Activated CD4-positive, alpha-beta memory T cell treated with anti-CD3 and anti-CD28 coated beads for 36 hours (primary cell): ENCODE measurements at regions of chr16 and their contacts with region 1.

Region 1: DNA sequence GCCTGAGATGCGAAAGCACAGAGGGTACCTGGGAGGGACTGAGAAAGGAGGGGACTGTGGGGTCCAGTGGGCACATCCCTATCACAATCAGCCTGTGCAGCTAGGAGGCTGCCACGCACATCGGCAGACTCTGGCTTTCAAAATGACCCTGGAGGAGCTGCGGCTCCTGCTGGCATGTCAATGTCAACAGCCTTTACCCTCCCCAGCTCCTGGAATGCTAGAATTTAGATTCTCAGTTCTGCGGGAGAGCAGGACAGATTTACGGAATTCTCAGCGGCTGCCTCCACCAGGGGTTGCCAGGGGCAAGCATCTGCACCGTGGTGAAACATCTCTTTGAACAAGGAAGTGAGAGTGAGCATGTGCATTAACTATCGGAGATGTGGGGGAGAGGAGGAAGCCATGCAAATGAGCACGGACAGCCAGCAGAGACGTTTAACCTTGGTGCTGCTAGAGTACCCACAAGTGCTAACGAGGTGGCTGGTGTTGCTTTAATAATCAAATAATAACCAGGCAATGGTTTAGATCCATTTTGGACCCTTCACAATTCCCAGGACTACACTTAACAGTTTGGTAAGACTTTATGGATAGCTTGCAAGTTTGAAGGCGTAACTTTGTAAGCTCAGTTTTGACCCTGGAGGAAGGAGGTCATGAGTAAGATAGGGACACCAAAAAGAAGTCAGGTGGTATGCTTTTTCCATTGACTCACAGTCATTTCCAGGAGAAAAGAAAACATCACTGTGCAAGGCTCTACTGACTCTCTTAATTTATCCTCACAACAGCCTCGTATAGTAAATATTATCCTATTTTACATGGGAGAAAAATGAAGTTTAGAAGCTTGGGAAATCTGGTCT is 54.1 kb downstream of the XYLT1 start:
- DNase-seq: peak; percentile 73
- H3K4me3 Mint-ChIP-seq: peak overlapping the region; percentile 63
- H3K27ac Mint-ChIP-seq: peak overlapping the region; percentile 94
- H3K4me1 Mint-ChIP-seq: peaks cover 48% of the 10 kb centered on the region
- H3K27me3 Mint-ChIP-seq: no peaks in the 10 kb centered on the region

Region 2: DNA sequence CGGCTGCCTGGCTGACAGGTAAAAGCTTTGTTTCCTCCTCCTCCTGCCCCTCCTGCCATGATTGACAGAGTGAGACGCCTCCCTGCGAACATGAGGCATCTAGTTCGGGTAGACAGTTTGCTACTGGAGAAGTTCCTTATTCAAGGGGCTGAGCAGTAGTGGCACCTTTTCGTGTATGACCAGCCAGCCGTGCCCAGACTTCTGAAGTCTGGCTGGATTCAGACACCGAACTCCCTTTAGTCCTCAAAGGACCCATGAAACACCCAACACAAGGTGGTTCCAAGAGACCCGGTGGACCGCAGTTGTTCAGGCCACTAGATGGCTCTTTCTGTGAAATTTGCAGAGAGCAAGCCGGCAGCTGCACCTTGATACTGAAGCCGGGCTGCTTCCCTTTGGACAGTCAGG is 138.7 kb before region 1 on chr16:
- CTCF ChIA-PET with region 1: interaction called, 4 read pairs
- POLR2A ChIA-PET with region 1: no interaction called
- intact Hi-C with region 1: loop called (anchors 1 kb)
- DNase-seq: no peak
- H3K4me3 Mint-ChIP-seq: no peak overlapping the region
- H3K27ac Mint-ChIP-seq: no peak overlapping the region
- H3K4me1 Mint-ChIP-seq: peaks cover 33% of the 10 kb centered on the region
- H3K27me3 Mint-ChIP-seq: no peaks in the 10 kb centered on the region

Region 3: GRCh38 chr16:17313085-17313611 is 103.5 kb before region 1 on chr16:
- CTCF ChIA-PET with region 1: no interaction called
- POLR2A ChIA-PET with region 1: no interaction called
- intact Hi-C with region 1: no loop called
- DNase-seq: no peak
- H3K4me3 Mint-ChIP-seq: no peak overlapping the region
- H3K27ac Mint-ChIP-seq: no peak overlapping the region
- H3K4me1 Mint-ChIP-seq: peaks cover 11% of the 10 kb centered on the region
- H3K27me3 Mint-ChIP-seq: no peaks in the 10 kb centered on the region

Region 4: GRCh38 chr16:17364319-17365210 is 52.1 kb before region 1 on chr16:
- CTCF ChIA-PET with region 1: interaction called, 9 read pairs
- POLR2A ChIA-PET with region 1: interaction called, 10 read pairs
- intact Hi-C with region 1: loop called (anchors 1 kb)
- DNase-seq: peak; percentile 72
- H3K4me3 Mint-ChIP-seq: peak overlapping the region; percentile 48
- H3K27ac Mint-ChIP-seq: peak overlapping the region; percentile 83
- H3K4me1 Mint-ChIP-seq: peaks cover 95% of the 10 kb centered on the region
- H3K27me3 Mint-ChIP-seq: no peaks in the 10 kb centered on the region

Region 5: GRCh38 chr16:17369421-17370222 is 47.1 kb before region 1 on chr16:
- CTCF ChIA-PET with region 1: interaction called, 9 read pairs
- POLR2A ChIA-PET with region 1: interaction called, 10 read pairs
- intact Hi-C with region 1: loop called (anchors 2 kb)
- DNase-seq: peak; percentile 76
- H3K4me3 Mint-ChIP-seq: peak overlapping the region; percentile 87
- H3K27ac Mint-ChIP-seq: peak overlapping the region; percentile 96
- H3K4me1 Mint-ChIP-seq: peaks cover 86% of the 10 kb centered on the region
- H3K27me3 Mint-ChIP-seq: no peaks in the 10 kb centered on the region

Region 6: GRCh38 chr16:17439580-17439979 is 22.9 kb after region 1 on chr16:
- CTCF ChIA-PET with region 1: interaction called, 4 read pairs
- POLR2A ChIA-PET with region 1: interaction called, 4 read pairs
- intact Hi-C with region 1: loop called (anchors 1 kb)
- DNase-seq: no peak
- H3K4me3 Mint-ChIP-seq: no peak overlapping the region
- H3K27ac Mint-ChIP-seq: peak overlapping the region; percentile 70
- H3K4me1 Mint-ChIP-seq: peaks cover 27% of the 10 kb centered on the region
- H3K27me3 Mint-ChIP-seq: no peaks in the 10 kb centered on the region

Region 7: GRCh38 chr16:17451843-17452242 is 35.2 kb after region 1 on chr16:
- CTCF ChIA-PET with region 1: interaction called, 3 read pairs
- POLR2A ChIA-PET with region 1: no interaction called
- intact Hi-C with region 1: loop called (anchors 5 kb)
- DNase-seq: peak; percentile 23
- H3K4me3 Mint-ChIP-seq: no peak overlapping the region
- H3K27ac Mint-ChIP-seq: peak overlapping the region; percentile 50
- H3K4me1 Mint-ChIP-seq: peaks cover 50% of the 10 kb centered on the region
- H3K27me3 Mint-ChIP-seq: no peaks in the 10 kb centered on the region